ENCODE measurements at regions of chr12 and their contacts with region 1.

Region 1: GRCh38 chr12:6507102-6507998 is 13.4 kb downstream of the NCAPD2 start:
- DNase-seq: peak in 1 of 2 experiments; percentile 32
- H3K4me3 ChIP-seq: no peak overlapping the region
- H3K4me1 ChIP-seq: peaks cover 4% of the 10 kb centered on the region; the same call in 1 of the 2 replicates
- H3K27me3 ChIP-seq: no peaks in the 10 kb centered on the region

Region 2: DNA sequence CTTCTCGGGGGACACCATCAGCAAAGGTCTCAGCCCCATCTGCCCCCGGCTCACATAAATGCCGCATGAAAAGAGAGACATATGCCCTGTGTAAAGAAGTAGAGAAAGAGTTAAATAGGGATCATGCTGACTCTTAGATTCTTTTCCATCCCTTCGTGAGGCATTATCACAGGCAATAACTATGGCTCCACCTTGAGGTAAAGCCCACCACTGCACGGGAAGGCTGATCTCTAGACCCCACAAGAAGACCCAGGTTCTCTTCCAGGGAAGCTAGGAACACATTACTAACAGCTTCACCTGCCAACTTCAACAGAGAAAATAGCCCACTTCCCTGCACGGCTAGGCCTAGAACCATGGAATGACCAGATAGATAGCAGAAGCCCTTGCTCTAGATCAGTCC is 74.8 kb after region 1 on chr12:
- in situ Hi-C with region 1: loop called (anchors 5 kb)
- DNase-seq: no peak
- H3K4me3 ChIP-seq: no peak overlapping the region
- H3K4me1 ChIP-seq: no peaks in the 10 kb centered on the region
- H3K27me3 ChIP-seq: no peaks in the 10 kb centered on the region

Region 3: GRCh38 chr12:6708960-6709394 is 201.6 kb after region 1 on chr12:
- in situ Hi-C with region 1: no loop called
- DNase-seq: peak in 1 of 2 experiments; percentile 40
- H3K4me3 ChIP-seq: no peak overlapping the region
- H3K4me1 ChIP-seq: no peaks in the 10 kb centered on the region
- H3K27me3 ChIP-seq: no peaks in the 10 kb centered on the region